ENCODE measurements at regions of chr1 and their contacts with region 1.

Region 1: GRCh38 chr1:226827968-226828513 is 42.4 kb upstream of the PSEN2 start:
- DNase-seq: peak; percentile 96
- ATAC-seq: peak; percentile 98

Region 2: GRCh38 chr1:226424228-226425003 is 403.6 kb before region 1 on chr1:
- intact Hi-C with region 1: loop called (anchors 10 kb)
- DNase-seq: no peak
- ATAC-seq: peak; percentile 80

Region 3: GRCh38 chr1:226547754-226548191 is 280.3 kb before region 1 on chr1:
- intact Hi-C with region 1: loop called (anchors 5 kb)
- DNase-seq: peak; percentile 88
- ATAC-seq: peak; percentile 83

Region 4: GRCh38 chr1:226626577-226626956 is 201.5 kb before region 1 on chr1:
- intact Hi-C with region 1: loop called (anchors 2 kb)
- DNase-seq: peak; percentile 87
- ATAC-seq: peak; percentile 81

Region 5: DNA sequence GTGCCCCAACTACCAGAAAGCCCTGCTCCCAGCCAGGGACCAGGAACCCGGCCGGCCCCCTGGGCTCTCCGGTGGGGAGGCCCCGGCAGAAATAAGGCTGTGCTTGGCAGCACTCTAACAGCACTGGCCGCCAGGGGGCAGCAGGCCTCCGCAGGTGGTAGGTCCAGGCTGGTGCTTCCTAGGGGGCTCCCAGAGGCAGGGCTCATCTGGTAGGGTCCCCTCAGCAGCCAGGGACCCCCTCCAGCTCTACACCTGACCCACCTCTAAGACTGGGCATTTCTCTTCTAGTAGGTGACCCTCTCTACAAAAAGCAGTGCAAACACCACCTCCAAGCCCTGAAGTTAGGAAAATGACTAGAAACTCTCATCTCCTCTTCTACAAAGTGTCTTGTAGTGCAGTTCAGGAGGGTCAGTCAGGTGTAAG is 193.9 kb before region 1 on chr1:
- intact Hi-C with region 1: loop called (anchors 1 kb)
- DNase-seq: peak; percentile 92
- ATAC-seq: peak; percentile 79

Region 6: GRCh38 chr1:226736908-226737818 is 90.9 kb before region 1 on chr1:
- intact Hi-C with region 1: loop called (anchors 2 kb)
- DNase-seq: peak; percentile 72
- ATAC-seq: peak; percentile 56

Region 7: GRCh38 chr1:226778657-226779058 is 49.4 kb before region 1 on chr1:
- intact Hi-C with region 1: no loop called
- DNase-seq: no peak
- ATAC-seq: peak; percentile 69